ENCODE measurements at regions of chr12 and their contacts with region 1.

Region 1: GRCh38 chr12:67698672-67699581 is 50.4 kb downstream of the DYRK2 start:
- DNase-seq: peak; percentile 34
- H3K4me3 Mint-ChIP-seq: peak overlapping the region; percentile 42
- H3K27ac Mint-ChIP-seq: peak overlapping the region; percentile 67
- H3K4me1 Mint-ChIP-seq: peaks cover 49% of the 10 kb centered on the region
- H3K27me3 Mint-ChIP-seq: peaks cover 53% of the 10 kb centered on the region

Region 2: GRCh38 chr12:67452119-67452805 is 246.7 kb before region 1 on chr12:
- intact Hi-C with region 1: loop called (anchors 1 kb)
- DNase-seq: no peak
- H3K4me3 Mint-ChIP-seq: peak overlapping the region; percentile 12
- H3K27ac Mint-ChIP-seq: peak overlapping the region; percentile 82
- H3K4me1 Mint-ChIP-seq: peaks cover 47% of the 10 kb centered on the region
- H3K27me3 Mint-ChIP-seq: peaks cover 20% of the 10 kb centered on the region

Region 3: DNA sequence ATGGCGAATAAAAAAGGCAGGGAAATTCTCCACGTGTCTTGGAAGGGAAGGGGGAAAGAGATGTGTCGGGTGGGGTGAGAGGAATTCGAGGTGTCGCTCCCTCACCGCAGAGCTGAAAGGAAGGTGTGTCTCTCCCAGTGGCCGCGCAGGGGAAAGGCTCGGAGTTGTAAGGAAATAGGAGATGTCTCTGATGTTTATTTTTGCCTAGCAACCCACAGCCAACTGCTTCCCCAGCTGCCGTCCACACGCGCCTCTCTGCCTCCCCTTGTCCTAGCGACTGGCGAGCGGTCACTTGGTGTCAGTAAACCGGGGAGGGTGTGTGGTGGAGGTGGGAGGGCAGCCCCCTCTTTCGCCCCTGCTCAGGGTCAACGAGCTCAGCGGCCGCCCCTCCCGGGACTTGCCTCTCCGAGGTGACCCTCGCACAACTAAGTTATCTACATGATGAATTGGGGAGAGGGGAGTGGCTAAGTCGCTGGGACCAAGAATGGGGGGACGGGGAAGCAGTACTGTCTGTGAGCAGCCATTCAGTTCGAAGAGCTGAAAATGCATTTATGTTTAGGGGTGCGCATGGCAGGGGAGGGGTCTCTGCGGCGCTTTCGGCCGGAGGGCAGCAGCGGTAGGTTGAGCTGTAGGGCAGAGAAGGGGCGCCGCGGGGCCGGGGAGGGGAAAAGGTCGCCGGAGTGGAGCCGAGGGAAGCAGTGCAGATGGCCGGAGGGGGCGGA is 51.0 kb before region 1 on chr12:
- intact Hi-C with region 1: loop called (anchors 1 kb)
- DNase-seq: peak; percentile 17
- H3K4me3 Mint-ChIP-seq: peak overlapping the region; percentile 83
- H3K27ac Mint-ChIP-seq: peak overlapping the region; percentile 89
- H3K4me1 Mint-ChIP-seq: peaks cover 36% of the 10 kb centered on the region
- H3K27me3 Mint-ChIP-seq: peaks cover 3% of the 10 kb centered on the region

Region 4: GRCh38 chr12:67943226-67943892 is 244.4 kb after region 1 on chr12:
- intact Hi-C with region 1: loop called (anchors 5 kb)
- DNase-seq: peak; percentile 27
- H3K4me3 Mint-ChIP-seq: no peak overlapping the region
- H3K27ac Mint-ChIP-seq: no peak overlapping the region
- H3K4me1 Mint-ChIP-seq: peaks cover 5% of the 10 kb centered on the region
- H3K27me3 Mint-ChIP-seq: peaks cover 6% of the 10 kb centered on the region

Region 5: DNA sequence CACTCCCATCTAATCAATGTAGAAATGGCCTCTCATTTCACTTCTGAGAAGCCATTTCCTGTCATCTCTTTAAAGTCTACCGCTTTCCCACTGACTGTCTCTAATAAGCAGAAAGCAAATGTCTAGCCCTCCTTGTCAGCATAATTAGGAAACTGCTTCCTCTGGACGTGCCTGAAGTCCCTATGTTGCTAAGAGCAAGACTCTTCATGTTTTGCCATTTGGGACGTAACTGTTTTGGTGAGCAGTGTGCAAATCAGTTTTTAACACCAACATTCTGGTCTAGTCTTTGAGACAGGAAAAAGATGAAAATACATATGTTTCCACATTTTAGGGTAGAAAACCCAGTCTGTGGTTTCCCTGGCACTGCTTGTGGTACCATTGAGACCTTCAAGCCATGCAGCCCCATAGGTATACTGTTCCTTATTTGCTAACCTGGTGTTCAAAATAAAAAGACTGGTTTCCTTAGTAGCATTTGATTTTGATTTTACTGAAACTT is 438.5 kb after region 1 on chr12:
- intact Hi-C with region 1: loop called (anchors 5 kb)
- DNase-seq: no peak
- H3K4me3 Mint-ChIP-seq: peak overlapping the region; percentile 61
- H3K27ac Mint-ChIP-seq: peak overlapping the region; percentile 91
- H3K4me1 Mint-ChIP-seq: peaks cover 75% of the 10 kb centered on the region
- H3K27me3 Mint-ChIP-seq: no peaks in the 10 kb centered on the region

Region 6: DNA sequence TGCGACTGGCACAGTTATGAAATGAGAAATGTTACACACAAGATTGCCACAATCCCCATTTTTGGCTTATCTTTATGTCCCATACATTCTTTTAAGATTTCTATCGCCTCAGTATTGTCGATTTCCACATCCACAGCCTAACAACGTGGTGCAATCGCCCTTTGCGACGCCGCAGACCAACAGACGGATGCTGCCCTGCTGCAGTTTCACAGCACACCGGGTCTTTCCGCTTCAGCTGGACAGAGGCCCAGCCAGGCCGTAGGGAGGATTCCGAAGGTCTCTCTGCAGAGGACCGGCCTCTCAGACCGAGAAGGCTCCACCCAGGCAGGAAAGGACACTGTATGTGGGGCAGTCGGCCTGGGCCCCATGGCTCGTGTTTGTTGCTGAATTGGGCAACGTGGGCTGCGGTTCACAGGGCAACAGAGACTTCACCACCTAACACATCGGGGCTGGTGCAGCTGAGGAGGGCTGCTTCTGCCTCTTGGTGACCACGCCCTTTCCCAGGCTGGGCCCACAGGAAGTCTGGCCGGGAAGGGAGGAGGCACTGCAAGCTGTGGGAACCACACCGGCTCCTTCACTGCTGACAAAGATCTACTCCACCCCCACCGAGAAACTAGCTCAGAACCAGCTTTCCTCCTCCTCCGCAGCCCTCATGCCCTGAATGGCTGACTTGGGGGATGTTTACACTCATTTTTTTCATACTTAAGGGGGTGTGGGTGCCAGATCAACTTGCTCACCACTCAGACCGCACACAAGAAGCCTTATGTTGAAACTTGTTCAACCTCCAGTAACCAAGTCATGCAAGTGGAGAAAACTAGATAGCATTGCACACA is 666.2 kb after region 1 on chr12:
- intact Hi-C with region 1: loop called (anchors 10 kb)
- DNase-seq: peak; percentile 85
- H3K4me3 Mint-ChIP-seq: peak overlapping the region; percentile 77
- H3K27ac Mint-ChIP-seq: peak overlapping the region; percentile 92
- H3K4me1 Mint-ChIP-seq: peaks cover 76% of the 10 kb centered on the region
- H3K27me3 Mint-ChIP-seq: no peaks in the 10 kb centered on the region

Measured in activated T-helper 1 cell treated with anti-CD3 and anti-CD28 coated beads, Interleukin-12 subunit alpha, Interleukin-12 subunit beta, Interleukin-2, Interleukin-4 antibody, amounts not matched to agents 30 ng/mL and 10 ng/mL and 1 ng/mL, durations not matched to agents 14 hours and 24 hours and 36 hours (primary cell).